HEK293 (cell line): ENCODE measurements at regions of chr6 and their contacts with region 1.

Region 1: DNA sequence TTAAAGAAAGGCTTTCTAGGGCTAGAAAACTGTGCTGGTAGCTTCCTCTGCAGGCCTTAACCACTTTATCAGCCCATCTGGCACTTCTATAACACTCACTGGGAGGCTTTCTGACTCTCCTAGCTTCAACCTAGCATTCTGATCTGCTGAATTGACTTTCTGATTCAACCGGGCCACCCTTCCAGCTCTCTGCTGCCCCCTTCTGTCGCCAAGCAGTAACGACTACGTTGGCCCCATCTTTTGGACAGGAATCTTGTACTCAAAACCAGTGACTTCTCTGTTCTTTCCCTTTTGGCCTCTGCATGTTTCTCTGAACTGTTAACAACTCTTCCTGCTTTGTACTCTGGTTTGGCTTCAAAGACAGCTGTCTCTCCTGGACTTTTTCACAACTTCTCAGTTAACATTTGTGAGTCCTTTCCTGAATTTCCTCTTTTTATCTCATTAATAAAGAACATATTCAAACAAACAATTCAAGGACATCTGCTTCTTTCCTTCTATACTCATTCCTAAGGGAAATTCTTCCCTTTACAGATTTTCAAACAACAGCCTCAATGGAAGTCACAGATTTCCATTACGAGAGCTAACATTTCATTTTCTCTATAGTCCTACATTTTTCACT is 43.9 kb upstream of the FAM135A start:
- H3K4me3 ChIP-seq: no peak overlapping the region
- H3K27ac ChIP-seq: no peak overlapping the region
- H3K4me1 ChIP-seq: no peaks in the 10 kb centered on the region
- CTCF ChIP-seq: peak; percentile 78

Region 2: DNA sequence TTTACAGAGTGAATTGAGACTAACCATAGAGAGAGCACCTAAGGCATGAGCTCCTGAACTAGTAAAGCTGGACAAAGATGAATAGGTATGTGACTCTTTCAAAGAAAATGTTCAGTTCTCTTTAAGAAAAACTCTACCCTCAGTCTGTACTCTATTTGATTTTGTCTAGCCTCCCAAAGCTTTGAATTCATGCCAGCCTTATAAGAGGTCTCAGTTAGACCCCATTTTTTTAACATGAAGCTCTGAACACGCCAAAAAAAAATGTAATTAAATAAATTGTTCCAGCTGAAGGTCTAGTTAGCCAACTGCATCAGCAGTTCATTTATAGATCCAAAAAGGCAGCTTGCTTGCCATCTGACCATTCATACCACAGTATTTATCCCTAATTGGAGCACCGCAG is 138.1 kb before region 1 on chr6:
- CTCF ChIA-PET with region 1: interaction called, 11 read pairs
- POLR2A ChIA-PET with region 1: no interaction called
- H3K4me3 ChIP-seq: no peak overlapping the region
- H3K27ac ChIP-seq: no peak overlapping the region
- H3K4me1 ChIP-seq: no peaks in the 10 kb centered on the region
- CTCF ChIP-seq: no peak

Region 3: GRCh38 chr6:70327036-70327435 is 42.4 kb before region 1 on chr6:
- CTCF ChIA-PET with region 1: interaction called, 17 read pairs
- POLR2A ChIA-PET with region 1: no interaction called
- H3K4me3 ChIP-seq: no peak overlapping the region
- H3K27ac ChIP-seq: no peak overlapping the region
- H3K4me1 ChIP-seq: 0 out of 2 replicates have a peak, but pooled peaks cover 4% of the 10 kb centered on the region
- CTCF ChIP-seq: no peak

Region 4: DNA sequence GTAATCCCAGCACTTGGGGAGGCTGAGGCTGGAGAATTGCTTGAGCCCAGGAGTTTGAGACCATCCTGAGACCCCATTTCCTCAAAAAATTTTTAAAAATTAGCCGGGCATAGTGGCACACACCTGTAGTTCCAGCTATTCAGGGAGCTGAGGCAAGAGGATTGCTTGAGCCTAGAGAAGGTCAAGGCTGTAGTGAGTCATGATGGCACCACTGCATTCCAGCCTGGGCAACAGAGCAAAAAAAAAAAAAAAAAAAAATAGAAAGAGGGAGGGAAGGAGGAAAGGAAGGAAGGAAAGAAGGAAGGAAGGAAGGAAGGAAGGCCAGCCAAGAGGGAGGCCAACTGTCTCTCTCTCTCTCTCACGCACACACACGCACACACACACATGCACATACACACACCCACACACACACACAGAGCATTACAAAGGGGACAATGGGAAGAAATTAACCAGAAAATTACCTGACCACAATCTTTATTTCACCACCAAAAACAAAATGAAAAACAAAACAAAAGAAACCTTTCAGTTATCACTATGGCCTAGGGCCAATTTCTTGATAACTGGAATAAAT is 16.0 kb before region 1 on chr6:
- CTCF ChIA-PET with region 1: interaction called, 18 read pairs
- POLR2A ChIA-PET with region 1: no interaction called
- H3K4me3 ChIP-seq: no peak overlapping the region
- H3K27ac ChIP-seq: no peak overlapping the region
- H3K4me1 ChIP-seq: no peaks in the 10 kb centered on the region
- CTCF ChIP-seq: no peak

Region 5: DNA sequence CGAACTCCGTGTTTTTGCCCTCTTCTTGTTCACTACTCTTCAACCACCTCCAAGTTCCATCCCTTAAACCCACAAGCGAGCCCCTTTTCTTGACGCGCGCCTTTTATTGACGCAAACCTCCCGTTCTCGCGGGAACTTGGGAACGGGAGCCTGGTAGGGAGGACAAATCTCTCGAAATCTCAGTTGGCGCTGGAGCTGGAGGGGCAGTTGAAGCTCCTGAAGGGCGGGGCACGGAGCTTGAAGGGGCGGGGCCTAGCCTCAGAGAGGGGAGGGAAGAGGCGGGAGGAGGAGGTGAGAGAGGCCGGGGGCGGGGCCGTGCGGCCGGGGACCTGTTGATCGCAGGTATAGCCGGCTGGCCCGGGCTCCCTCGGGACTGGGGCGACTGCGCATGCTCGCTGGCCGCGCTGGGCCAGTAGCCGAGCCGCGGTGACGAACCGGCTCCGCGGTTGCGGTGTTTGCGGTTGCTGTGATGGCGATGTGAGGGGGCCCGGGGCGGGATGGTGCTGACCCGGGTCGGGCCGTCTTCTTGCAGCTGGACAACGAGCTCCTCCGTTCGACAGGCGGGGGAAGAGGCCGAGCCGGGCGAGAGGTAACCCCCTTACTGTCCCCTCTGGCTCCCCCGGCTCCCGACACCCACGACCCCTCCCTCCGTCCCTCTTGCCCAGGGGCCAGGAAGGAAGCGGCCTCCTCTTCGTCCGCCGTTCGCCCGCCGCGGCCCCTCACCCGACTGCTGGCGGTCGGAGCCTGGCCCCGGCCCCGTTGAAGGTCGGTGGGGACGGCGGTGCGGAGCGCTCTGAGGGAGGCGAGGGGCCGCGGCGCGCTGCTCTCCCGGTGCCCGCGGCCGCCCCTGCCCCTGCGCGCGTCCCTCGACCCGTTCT is 43.9 kb after region 1 on chr6 and contains the start of gene FAM135A:
- CTCF ChIA-PET with region 1: interaction called, 43 read pairs
- POLR2A ChIA-PET with region 1: interaction called, 15 read pairs
- H3K4me3 ChIP-seq: peak within 1 kb of the TSS; percentile 75
- H3K27ac ChIP-seq: peak within 1 kb of the TSS; percentile 74; the same call in 1 of the 2 replicates
- H3K4me1 ChIP-seq: peaks cover 6% of the 10 kb centered on the region; the same call in 1 of the 2 replicates
- CTCF ChIP-seq: 0 out of 2 replicates have a peak, but pooled peaks have one; percentile 28

Region 6: GRCh38 chr6:71012866-71013469 is 643.5 kb after region 1 on chr6:
- CTCF ChIA-PET with region 1: interaction called, 19 read pairs
- POLR2A ChIA-PET with region 1: no interaction called
- H3K4me3 ChIP-seq: no peak overlapping the region
- H3K27ac ChIP-seq: no peak overlapping the region
- H3K4me1 ChIP-seq: no peaks in the 10 kb centered on the region
- CTCF ChIP-seq: peak; percentile 42; the same call in 1 of the 2 replicates